ENCODE measurements at regions of chr13 and their contacts with region 1.

Region 1: GRCh38 chr13:43061496-43062265 is 38.3 kb downstream of the DNAJC15 start:
- DNase-seq: peak; percentile 29
- H3K4me3 Mint-ChIP-seq: no peak overlapping the region
- H3K27ac Mint-ChIP-seq: peak overlapping the region; percentile 3
- H3K4me1 Mint-ChIP-seq: peaks cover 46% of the 10 kb centered on the region
- H3K27me3 Mint-ChIP-seq: no peaks in the 10 kb centered on the region

Region 2: DNA sequence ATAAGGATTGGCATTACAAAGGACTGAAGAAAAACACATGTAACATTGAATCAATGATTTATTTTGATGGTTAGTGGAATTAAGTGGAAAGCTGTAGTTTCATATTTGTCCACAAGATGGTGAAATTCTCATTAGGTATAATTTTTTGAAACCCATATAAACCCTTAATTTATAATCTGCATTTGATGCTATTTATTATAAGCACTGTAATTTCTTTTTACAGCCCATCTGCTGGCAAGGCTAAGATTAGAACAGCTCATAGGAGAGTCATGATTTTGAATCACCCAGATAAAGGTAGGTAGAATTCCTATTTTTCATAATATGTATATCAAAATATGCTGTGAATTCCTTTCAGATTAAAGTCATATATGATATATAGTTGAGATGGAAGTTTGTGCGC is 23.9 kb after region 1 on chr13:
- CTCF ChIA-PET with region 1: no interaction called
- POLR2A ChIA-PET with region 1: no interaction called
- intact Hi-C with region 1: loop called (anchors 1 kb)
- DNase-seq: no peak
- H3K4me3 Mint-ChIP-seq: no peak overlapping the region
- H3K27ac Mint-ChIP-seq: no peak overlapping the region
- H3K4me1 Mint-ChIP-seq: peaks cover 15% of the 10 kb centered on the region
- H3K27me3 Mint-ChIP-seq: no peaks in the 10 kb centered on the region

Region 3: GRCh38 chr13:43596924-43597598 is 535.4 kb after region 1 on chr13:
- CTCF ChIA-PET with region 1: no interaction called
- POLR2A ChIA-PET with region 1: no interaction called
- intact Hi-C with region 1: no loop called
- DNase-seq: peak; percentile 11
- H3K4me3 Mint-ChIP-seq: no peak overlapping the region
- H3K27ac Mint-ChIP-seq: no peak overlapping the region
- H3K4me1 Mint-ChIP-seq: peaks cover 13% of the 10 kb centered on the region
- H3K27me3 Mint-ChIP-seq: peaks cover 2% of the 10 kb centered on the region